ENCODE measurements at regions of chr16 and their contacts with region 1.

Region 1: GRCh38 chr16:22023505-22023904 is 15.6 kb downstream of the MOSMO start:
- DNase-seq: no peak
- ATAC-seq: no peak
- H3K4me3 ChIP-seq: no peak overlapping the region
- H3K27ac ChIP-seq: no peak overlapping the region
- H3K4me1 ChIP-seq: peaks cover 40% of the 10 kb centered on the region
- CTCF ChIP-seq: no peak
- EP300 ChIP-seq: no peak
- POLR2A ChIP-seq: no peak
- RAD21 ChIP-seq: no peak

Region 2: DNA sequence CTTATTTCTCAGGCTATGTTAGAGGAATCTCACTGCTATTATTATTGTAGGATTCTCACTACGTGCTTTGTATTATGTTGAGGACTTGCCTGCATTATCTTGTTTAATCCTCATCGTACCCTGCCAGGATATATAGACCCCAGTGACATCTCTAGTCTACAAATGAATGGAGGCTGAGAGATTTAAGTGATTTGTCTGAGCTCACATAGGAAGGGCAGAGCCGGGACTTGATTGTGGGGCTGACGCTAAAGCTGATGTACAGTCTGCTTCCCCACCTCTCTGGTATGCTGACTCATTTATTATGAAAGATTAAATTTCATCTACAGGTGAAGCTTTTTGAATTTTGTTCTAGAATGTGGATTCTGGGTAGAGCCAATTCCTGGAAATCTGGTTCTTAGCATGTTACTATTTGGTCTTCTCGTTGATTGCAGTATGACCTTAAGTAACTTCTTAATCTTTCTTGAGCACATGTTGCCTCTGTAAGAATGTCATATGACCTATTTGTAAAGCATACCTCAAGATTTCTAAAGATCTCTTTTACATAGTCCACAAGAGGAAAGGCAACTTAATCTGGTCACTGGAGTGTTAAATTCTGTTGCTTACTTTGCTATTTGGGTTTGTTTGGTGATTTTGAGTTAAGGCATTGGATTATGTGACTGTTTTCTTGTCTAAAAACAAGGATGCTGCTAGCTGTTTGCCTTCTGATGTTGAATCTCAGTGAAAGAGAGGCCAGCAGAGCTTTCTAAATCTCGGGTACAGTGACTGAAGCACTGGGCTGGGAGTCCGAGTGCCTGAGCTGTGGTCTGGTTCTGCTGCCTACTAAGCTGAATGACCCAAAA is 411.7 kb before region 1 on chr16:
- CTCF ChIA-PET with region 1: no interaction called
- POLR2A ChIA-PET with region 1: no interaction called
- DNase-seq: no peak
- ATAC-seq: no peak
- H3K4me3 ChIP-seq: no peak overlapping the region
- H3K27ac ChIP-seq: peak overlapping the region in 1 of 2 experiments; percentile 37; a peak in 1 of 6 replicates
- H3K4me1 ChIP-seq: peaks cover 20% of the 10 kb centered on the region
- CTCF ChIP-seq: no peak
- EP300 ChIP-seq: no peak
- POLR2A ChIP-seq: no peak
- RAD21 ChIP-seq: no peak

Region 3: GRCh38 chr16:21971856-21972255 is 51.6 kb before region 1 on chr16:
- CTCF ChIA-PET with region 1: no interaction called
- POLR2A ChIA-PET with region 1: no interaction called
- DNase-seq: no peak
- ATAC-seq: no peak
- H3K4me3 ChIP-seq: no peak overlapping the region
- H3K27ac ChIP-seq: no peak overlapping the region
- H3K4me1 ChIP-seq: no peaks in the 10 kb centered on the region
- CTCF ChIP-seq: no peak
- EP300 ChIP-seq: no peak
- POLR2A ChIP-seq: no peak
- RAD21 ChIP-seq: no peak

Region 4: DNA sequence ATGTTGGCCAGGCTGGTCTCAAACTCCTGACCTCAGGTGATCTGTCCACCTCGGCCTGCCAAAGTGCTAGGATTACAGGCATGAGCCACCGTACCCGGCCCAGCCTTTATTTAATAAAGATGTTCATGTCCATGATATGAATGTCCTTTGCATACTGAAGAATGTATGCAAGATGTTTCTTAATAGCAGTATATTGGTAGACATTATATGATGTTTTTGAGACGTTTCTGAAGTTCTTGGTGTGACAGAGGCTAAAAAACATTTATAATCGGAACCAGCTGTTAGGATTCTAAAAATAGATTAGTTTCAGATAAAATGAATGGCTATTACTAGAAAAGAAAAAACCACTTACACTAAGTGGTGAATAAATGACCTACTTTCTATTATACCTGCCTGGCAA is 34.4 kb before region 1 on chr16:
- CTCF ChIA-PET with region 1: no interaction called
- POLR2A ChIA-PET with region 1: no interaction called
- DNase-seq: no peak
- ATAC-seq: no peak
- H3K4me3 ChIP-seq: no peak overlapping the region
- H3K27ac ChIP-seq: no peak overlapping the region
- H3K4me1 ChIP-seq: no peaks in the 10 kb centered on the region
- CTCF ChIP-seq: no peak
- EP300 ChIP-seq: no peak
- POLR2A ChIP-seq: no peak
- RAD21 ChIP-seq: no peak

Region 5: DNA sequence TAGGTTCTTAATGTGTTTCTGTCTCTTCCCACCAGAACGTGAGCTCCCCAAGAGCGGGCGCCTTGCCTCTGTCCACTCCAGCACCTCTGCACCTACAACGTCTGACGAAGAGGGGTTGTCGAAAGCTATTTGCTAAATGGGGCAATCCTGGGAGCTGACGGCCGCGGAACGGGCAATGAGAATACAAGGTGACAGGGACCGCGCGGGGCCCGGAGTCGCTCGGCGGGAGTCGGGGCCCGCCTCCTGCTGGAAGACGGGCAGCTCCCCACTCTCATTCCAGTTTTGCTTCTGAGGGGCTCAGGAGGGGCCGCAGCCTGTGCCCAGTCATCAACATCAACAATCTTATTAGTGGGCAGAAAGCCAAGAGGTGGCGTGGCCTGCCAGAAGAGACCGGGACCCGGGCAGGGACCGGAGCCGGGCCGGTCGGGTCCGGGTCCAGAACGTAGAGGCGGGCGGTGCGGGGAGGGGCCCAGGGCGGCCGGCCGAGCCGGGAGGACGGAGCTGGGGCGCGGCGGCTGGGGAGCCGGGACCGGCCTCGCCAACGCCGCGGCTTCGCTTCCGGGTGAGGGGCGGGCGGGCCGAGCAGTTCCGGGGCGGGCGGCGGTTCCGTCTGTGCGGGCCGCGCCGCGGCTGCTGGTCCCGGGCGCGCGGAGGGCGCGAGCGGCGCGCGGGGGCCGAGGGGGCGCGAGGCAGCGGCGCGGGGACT is 15.8 kb before region 1 on chr16 and contains the start of gene MOSMO:
- CTCF ChIA-PET with region 1: interaction called, 5 read pairs
- POLR2A ChIA-PET with region 1: interaction called, 10 read pairs
- DNase-seq: peak; percentile 46 to 60
- ATAC-seq: peak; percentile 90 to 91
- H3K4me3 ChIP-seq: peak within 1 kb of the TSS; percentile 90
- H3K27ac ChIP-seq: peak within 1 kb of the TSS; percentile 91 to 93
- H3K4me1 ChIP-seq: peaks cover 13% of the 10 kb centered on the region; the same call in 2 of the 3 replicates
- CTCF ChIP-seq: no peak
- EP300 ChIP-seq: no peak
- POLR2A ChIP-seq: peak; percentile 52
- RAD21 ChIP-seq: no peak
- polyA plus RNA-seq, gene MOSMO: 14.4 and 14.7 TPM in 2 replicates

Region 6: GRCh38 chr16:22217889-22218730 is 194.6 kb after region 1 on chr16:
- CTCF ChIA-PET with region 1: no interaction called
- POLR2A ChIA-PET with region 1: no interaction called
- DNase-seq: peak; percentile 45 to 51
- ATAC-seq: peak; percentile 53 to 76; a peak in 4 of 6 replicates
- H3K4me3 ChIP-seq: no peak overlapping the region
- H3K27ac ChIP-seq: no peak overlapping the region
- H3K4me1 ChIP-seq: no peaks in the 10 kb centered on the region
- CTCF ChIP-seq: no peak
- EP300 ChIP-seq: no peak
- POLR2A ChIP-seq: no peak
- RAD21 ChIP-seq: no peak